HepG2 (cell line): ENCODE measurements at regions of chr3 and their contacts with region 1.

Region 1: GRCh38 chr3:51391075-51391567 is at the start of gene RBM15B:
- DNase-seq: peak; percentile 90
- ATAC-seq: peak; percentile 89
- H3K4me3 ChIP-seq: peak within 1 kb of the TSS; percentile 68 to 89 (median 87)
- H3K27ac ChIP-seq: peak within 1 kb of the TSS; percentile 64
- H3K4me1 ChIP-seq: peaks cover 75% of the 10 kb centered on the region
- H3K27me3 ChIP-seq: no peaks in the 10 kb centered on the region; a peak in 1 of 5 replicates
- CTCF ChIP-seq: peak; percentile 97
- EP300 ChIP-seq: peak in 1 of 2 experiments; percentile 50; a peak in 2 of 4 replicates
- POLR2A ChIP-seq: no peak; a peak in 2 of 4 replicates
- RAD21 ChIP-seq: peak; percentile 68
- total RNA-seq, gene RBM15B: 19.3 and 19.6 TPM in 2 replicates

Region 2: DNA sequence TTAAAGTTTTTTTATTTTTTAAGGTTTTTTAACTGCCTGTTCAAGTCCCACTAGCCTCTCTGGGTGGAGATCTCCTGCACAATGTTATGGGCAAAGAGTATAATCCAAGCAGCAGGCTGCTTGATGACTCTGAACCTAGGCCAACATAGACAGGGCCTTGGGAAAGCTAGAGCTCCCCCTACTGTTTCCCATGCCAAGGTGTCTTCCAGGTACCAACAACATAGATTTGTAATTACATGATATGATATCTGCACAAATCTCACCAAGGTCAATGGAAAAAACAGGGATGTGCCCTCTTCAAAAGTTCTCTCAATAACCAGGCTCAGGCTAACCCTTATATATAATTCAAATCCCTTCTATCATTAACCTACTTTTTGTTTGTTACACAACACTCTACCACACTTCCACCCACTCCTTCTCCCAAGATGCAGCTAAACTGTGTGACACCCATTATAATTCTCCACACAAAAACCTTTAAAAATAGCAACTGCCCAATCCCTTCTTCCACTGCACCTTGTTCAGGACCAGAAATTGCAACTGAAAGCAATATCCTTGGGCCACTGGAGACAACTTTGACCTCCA is 43.7 kb after region 1 on chr3:
- CTCF ChIA-PET with region 1: interaction called, 4 read pairs
- POLR2A ChIA-PET with region 1: no interaction called
- in situ Hi-C with region 1: no loop called
- intact Hi-C with region 1: loop called (anchors 2 kb)
- DNase-seq: peak; percentile 48
- ATAC-seq: peak; percentile 91
- H3K4me3 ChIP-seq: no peak overlapping the region
- H3K27ac ChIP-seq: peak overlapping the region; percentile 59
- H3K4me1 ChIP-seq: peaks cover 8% of the 10 kb centered on the region; the same call in 1 of the 2 replicates
- H3K27me3 ChIP-seq: no peaks in the 10 kb centered on the region
- CTCF ChIP-seq: peak; percentile 74
- EP300 ChIP-seq: no peak
- POLR2A ChIP-seq: no peak
- RAD21 ChIP-seq: no peak

Region 3: DNA sequence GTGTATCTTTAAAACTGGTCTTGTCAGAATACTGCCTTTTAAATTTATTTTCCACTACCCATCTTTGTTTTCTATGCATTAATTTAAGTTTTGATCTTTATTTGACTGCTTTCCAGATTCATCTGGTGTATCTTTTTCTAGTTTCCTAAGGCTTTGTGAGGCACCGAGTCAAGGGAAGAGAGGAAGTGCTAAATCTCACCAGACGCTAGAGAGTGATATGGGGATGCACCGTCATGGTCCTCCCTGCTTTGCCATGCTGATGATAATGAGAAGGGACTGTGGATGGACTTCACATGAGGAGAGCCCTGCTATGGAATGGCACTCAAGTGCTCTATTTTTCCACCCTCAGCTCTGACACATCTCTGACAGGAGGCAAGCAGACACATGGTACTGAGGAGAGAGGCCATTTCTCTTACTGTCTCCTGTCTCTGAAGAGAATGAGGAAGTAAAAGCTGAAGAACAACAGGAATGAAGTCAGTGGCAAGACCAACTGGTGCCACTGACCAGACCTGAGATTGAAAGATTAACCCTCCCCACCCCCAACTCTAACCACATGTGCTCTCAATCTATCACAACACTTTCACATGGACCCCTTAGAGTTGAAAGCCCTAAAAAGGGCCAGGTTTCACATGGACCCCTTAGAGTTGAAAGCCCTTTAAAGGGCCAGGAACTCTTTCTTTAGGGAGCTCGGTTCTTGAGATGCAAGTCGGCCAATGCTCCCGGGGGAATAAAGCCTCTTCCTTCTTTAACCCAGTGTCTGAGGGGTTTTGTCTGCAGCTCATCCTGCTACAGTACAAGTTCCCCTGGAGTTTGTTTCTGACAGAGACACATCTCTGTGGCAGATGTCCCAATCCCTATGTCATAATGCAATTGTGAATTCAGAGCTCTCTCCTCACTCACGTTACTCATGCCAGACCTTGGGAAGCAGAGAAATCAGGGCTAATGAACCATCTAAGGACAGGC is 469.9 kb after region 1 on chr3 and contains the start of gene IQCF2:
- CTCF ChIA-PET with region 1: no interaction called
- POLR2A ChIA-PET with region 1: no interaction called
- in situ Hi-C with region 1: no loop called
- intact Hi-C with region 1: no loop called
- DNase-seq: no peak
- ATAC-seq: no peak
- H3K4me3 ChIP-seq: no peak within 1 kb of the TSS
- H3K27ac ChIP-seq: no peak within 1 kb of the TSS
- H3K4me1 ChIP-seq: no peaks in the 10 kb centered on the region
- H3K27me3 ChIP-seq: no peaks in the 10 kb centered on the region; a peak in 1 of 5 replicates
- CTCF ChIP-seq: no peak
- EP300 ChIP-seq: no peak
- POLR2A ChIP-seq: no peak
- RAD21 ChIP-seq: no peak
- total RNA-seq, gene IQCF2: not detected in 2 replicates